Calu3 (cell line): ENCODE measurements at regions of chr14 and their contacts with region 1.

Region 1: DNA sequence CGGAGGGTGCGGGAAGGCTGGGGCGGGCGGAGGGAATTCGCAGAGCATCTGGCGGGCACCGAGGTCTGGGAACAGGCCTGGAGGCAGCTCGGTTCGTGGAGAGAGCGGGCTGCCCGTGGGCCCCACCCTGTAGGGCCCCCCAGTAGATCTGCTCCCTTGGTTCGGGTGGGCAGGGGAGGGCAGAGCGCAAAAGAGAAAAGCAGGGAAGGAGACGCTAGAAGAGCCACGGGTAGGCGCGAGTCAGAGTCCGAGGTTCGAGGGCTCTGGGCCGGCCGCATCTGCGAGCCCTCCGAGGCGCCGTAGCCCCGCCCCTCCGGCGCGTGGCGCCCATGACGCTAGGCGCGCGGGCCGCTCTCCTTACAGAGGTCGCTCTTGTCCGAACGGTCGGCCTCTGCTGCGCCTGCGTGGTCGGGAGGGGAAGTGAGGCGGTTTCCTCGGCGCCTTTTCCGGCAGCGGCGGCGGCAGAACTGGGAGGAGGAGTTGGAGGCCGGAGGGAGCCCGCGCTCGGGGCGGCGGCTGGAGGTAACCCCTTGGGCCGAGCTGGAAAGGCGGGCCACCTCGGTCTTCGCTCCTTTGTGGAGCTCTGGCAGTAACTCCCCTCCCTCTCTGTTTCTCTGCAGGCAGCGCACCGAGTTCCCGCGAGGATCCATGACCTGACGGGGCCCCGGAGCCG is at the start of gene ARF6:
- DNase-seq: peak; percentile 98
- H3K4me3 Mint-ChIP-seq: peak within 1 kb of the TSS; percentile 87
- H3K27ac Mint-ChIP-seq: peak within 1 kb of the TSS; percentile 97
- H3K4me1 Mint-ChIP-seq: peaks cover 3% of the 10 kb centered on the region
- H3K27me3 Mint-ChIP-seq: no peaks in the 10 kb centered on the region
- CTCF ChIP-seq: no peak
- total RNA-seq, gene ARF6: 74.2 and 81.0 TPM in 2 replicates

Region 2: DNA sequence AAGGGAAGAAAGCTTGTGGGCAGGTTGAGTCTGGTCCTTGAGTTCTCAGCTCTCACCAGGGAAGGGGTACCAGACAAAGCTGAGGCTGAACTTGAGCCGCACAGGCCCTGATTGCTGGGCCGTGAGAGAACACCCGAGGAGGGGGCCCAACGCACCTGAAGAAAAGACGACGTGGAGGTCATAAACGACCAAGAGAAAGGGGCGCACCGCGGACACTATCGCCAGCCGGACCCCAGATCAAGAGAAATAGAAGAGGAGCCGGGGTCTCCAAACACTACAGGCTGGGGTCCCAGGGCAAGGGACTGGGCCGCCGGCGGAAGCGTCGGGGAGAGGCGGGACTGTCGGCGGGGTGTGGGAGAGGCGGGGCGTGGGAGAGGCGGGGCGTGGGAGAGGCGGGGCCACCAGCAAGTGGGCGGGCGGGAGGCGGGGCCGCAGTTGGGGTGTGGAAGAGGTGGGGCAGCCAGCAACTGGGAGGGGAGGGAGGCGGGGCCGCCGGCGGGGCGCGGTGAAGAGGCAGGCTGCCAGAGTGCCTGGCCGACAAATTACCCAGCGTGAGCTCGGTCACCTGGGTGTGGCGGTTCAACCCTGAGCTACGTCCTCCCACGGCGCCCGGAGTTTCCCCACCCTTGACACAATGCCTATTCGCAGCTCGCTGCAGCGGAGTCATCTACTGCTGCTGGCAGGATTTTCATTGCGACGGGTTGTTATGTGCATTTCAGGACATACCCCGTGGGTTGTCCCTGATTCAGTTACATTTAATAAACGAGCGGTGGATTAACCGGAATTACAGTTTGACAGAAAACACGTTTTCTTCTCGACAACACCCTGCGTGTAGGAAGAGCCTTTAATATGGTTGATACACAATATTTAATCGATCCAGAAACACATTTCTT is 24.7 kb before region 1 on chr14:
- CTCF ChIA-PET with region 1: interaction called, 8 read pairs
- intact Hi-C with region 1: loop called (anchors 2 kb)
- DNase-seq: peak; percentile 96
- H3K4me3 Mint-ChIP-seq: peak overlapping the region; percentile 82
- H3K27ac Mint-ChIP-seq: peak overlapping the region; percentile 76
- H3K4me1 Mint-ChIP-seq: peaks cover 8% of the 10 kb centered on the region
- H3K27me3 Mint-ChIP-seq: no peaks in the 10 kb centered on the region
- CTCF ChIP-seq: no peak

Region 3: GRCh38 chr14:49946320-49947141 is 53.8 kb after region 1 on chr14:
- CTCF ChIA-PET with region 1: no interaction called
- intact Hi-C with region 1: loop called (anchors 2 kb)
- DNase-seq: peak; percentile 57
- H3K4me3 Mint-ChIP-seq: peak overlapping the region; percentile 9
- H3K27ac Mint-ChIP-seq: peak overlapping the region; percentile 92
- H3K4me1 Mint-ChIP-seq: peaks cover 60% of the 10 kb centered on the region
- H3K27me3 Mint-ChIP-seq: no peaks in the 10 kb centered on the region
- CTCF ChIP-seq: no peak

Region 4: DNA sequence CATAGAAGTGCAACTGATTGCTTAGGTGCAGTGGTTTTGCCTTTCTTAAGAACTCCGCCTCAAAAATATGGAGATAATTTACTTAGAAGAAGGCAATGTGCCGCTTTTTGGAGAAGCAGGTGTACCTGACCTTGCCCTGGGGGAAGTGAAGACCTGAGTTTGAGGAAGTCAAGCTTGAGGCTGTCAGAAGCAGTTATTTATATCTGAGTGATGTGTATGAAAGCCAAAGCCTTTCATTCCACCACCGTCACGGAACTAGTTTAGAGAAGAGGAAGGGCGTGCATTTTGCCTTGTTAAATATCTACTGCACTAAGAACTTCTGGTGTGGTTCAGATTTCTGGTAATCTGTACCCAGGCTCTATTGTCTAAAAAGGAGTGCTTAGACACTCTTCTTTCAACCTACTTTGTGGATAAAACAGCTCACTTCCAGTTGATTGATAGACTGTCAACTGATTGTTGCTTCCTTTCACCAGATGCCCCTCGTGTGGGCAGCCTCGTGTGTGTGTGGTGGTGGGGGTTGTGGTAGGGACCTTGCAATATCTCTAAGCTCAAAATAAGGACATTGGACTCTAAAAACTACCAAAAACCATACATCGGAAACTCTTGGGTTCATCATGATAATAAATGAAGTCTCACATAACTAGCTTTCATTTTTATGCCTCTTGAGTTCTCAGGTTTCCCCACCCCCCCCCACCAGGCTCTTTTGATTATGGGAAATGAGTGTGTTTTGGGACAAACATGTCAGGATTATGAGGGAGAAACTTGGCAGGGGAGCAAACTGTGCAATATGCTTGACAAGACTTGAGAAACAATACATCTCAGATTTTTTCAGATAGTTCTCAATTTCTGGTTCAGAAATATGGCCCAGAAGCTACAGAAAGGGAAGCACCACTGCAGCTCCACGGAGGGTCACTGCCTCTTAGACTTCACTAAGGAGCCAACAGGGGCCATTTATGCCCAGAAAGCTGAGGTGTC is 78.7 kb after region 1 on chr14:
- CTCF ChIA-PET with region 1: interaction called, 4 read pairs
- intact Hi-C with region 1: loop called (anchors 1 kb)
- DNase-seq: no peak
- H3K4me3 Mint-ChIP-seq: peak overlapping the region; percentile 7
- H3K27ac Mint-ChIP-seq: peak overlapping the region; percentile 85
- H3K4me1 Mint-ChIP-seq: peaks cover 78% of the 10 kb centered on the region
- H3K27me3 Mint-ChIP-seq: no peaks in the 10 kb centered on the region
- CTCF ChIP-seq: no peak

Region 5: GRCh38 chr14:50101417-50101816 is 208.6 kb after region 1 on chr14:
- CTCF ChIA-PET with region 1: no interaction called
- intact Hi-C with region 1: loop called (anchors 5 kb)
- DNase-seq: no peak
- H3K4me3 Mint-ChIP-seq: no peak overlapping the region
- H3K27ac Mint-ChIP-seq: peak overlapping the region; percentile 67
- H3K4me1 Mint-ChIP-seq: peaks cover 30% of the 10 kb centered on the region
- H3K27me3 Mint-ChIP-seq: no peaks in the 10 kb centered on the region
- CTCF ChIP-seq: no peak